ENCODE measurements at regions of chr2 and their contacts with region 1.

Region 1: DNA sequence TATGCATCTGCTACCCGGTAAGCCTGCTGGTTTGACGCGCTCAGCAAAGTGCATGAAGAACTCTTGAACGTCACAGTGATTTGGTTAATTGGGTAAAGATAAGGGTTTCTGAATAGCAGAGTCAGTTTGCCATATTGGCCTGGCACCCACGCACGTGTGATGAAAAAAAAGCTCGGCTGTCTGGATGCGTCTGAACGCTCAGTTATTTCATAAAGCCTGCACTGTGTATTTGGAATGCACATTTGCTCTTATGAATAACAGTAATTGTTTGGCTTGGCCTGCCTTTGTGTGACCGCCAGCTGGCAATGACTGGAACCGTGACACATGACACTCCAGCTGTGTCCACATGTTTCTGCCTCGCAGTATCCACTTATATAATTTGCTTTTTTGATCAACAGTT is 129.2 kb upstream of the MEIS1 start:
- DNase-seq: no peak
- ATAC-seq: no peak
- H3K4me3 ChIP-seq: no peak overlapping the region
- H3K27ac ChIP-seq: no peak overlapping the region
- H3K4me1 ChIP-seq: no peaks in the 10 kb centered on the region
- H3K27me3 ChIP-seq: no peaks in the 10 kb centered on the region; the same call in 1 of the 2 replicates
- CTCF ChIP-seq: no peak

Region 2: DNA sequence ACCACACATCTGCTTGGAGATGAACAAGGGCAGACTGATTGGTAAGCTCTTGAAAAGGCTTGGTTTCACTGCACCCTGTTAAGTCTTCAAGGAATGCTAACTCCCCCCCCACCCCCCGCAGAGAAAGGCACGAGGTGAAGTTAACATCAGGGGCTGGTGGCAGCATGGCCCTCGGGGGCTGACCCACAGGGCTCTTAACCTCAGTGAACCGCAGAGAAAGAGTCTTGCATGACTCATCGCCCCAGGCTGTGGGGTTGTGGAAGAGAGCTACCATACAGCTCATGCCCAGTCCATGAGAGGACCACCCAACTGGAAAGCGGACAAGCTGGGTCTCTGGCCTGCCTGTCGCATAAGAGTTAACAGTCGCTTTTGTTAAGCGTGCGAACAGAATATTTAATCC is 1260.1 kb before region 1 on chr2:
- CTCF ChIA-PET with region 1: no interaction called
- POLR2A ChIA-PET with region 1: interaction called, 11 read pairs
- in situ Hi-C with region 1: no loop called
- intact Hi-C with region 1: no loop called
- DNase-seq: no peak
- ATAC-seq: no peak
- H3K4me3 ChIP-seq: no peak overlapping the region
- H3K27ac ChIP-seq: no peak overlapping the region
- H3K4me1 ChIP-seq: no peaks in the 10 kb centered on the region
- H3K27me3 ChIP-seq: no peaks in the 10 kb centered on the region
- CTCF ChIP-seq: no peak

Region 3: GRCh38 chr2:65885266-65885665 is 420.5 kb before region 1 on chr2:
- CTCF ChIA-PET with region 1: no interaction called
- POLR2A ChIA-PET with region 1: no interaction called
- in situ Hi-C with region 1: no loop called
- intact Hi-C with region 1: no loop called
- DNase-seq: no peak
- ATAC-seq: no peak
- H3K4me3 ChIP-seq: no peak overlapping the region
- H3K27ac ChIP-seq: no peak overlapping the region
- H3K4me1 ChIP-seq: no peaks in the 10 kb centered on the region
- H3K27me3 ChIP-seq: no peaks in the 10 kb centered on the region; the same call in 1 of the 2 replicates
- CTCF ChIP-seq: no peak

Region 4: GRCh38 chr2:66382091-66382490 is 76.4 kb after region 1 on chr2:
- CTCF ChIA-PET with region 1: no interaction called
- POLR2A ChIA-PET with region 1: no interaction called
- in situ Hi-C with region 1: no loop called
- intact Hi-C with region 1: no loop called
- DNase-seq: no peak
- ATAC-seq: no peak
- H3K4me3 ChIP-seq: no peak overlapping the region
- H3K27ac ChIP-seq: no peak overlapping the region
- H3K4me1 ChIP-seq: no peaks in the 10 kb centered on the region
- H3K27me3 ChIP-seq: peaks cover 3% of the 10 kb centered on the region
- CTCF ChIP-seq: no peak

Region 5: GRCh38 chr2:67834482-67834881 is 1528.8 kb after region 1 on chr2:
- CTCF ChIA-PET with region 1: interaction called, 12 read pairs
- POLR2A ChIA-PET with region 1: no interaction called
- in situ Hi-C with region 1: no loop called
- intact Hi-C with region 1: no loop called
- DNase-seq: no peak
- ATAC-seq: no peak
- H3K4me3 ChIP-seq: no peak overlapping the region
- H3K27ac ChIP-seq: no peak overlapping the region
- H3K4me1 ChIP-seq: no peaks in the 10 kb centered on the region
- H3K27me3 ChIP-seq: no peaks in the 10 kb centered on the region
- CTCF ChIP-seq: no peak